Activated CD8-positive, alpha-beta memory T cell treated with anti-CD3 and anti-CD28 coated beads, Interleukin-2, amount 10 ng/mL, durations not matched to agents 7 days and 5 days (primary cell): ENCODE measurements at regions of chr14 and their contacts with region 1.

Region 1: GRCh38 chr14:77151918-77152588 is 10.5 kb upstream of the ZDHHC22 start:
- DNase-seq: no peak
- ATAC-seq: peak; percentile 61
- H3K4me3 Mint-ChIP-seq: no peak overlapping the region
- H3K27ac Mint-ChIP-seq: no peak overlapping the region
- H3K4me1 Mint-ChIP-seq: no peaks in the 10 kb centered on the region
- H3K27me3 Mint-ChIP-seq: peaks cover 31% of the 10 kb centered on the region

Region 2: DNA sequence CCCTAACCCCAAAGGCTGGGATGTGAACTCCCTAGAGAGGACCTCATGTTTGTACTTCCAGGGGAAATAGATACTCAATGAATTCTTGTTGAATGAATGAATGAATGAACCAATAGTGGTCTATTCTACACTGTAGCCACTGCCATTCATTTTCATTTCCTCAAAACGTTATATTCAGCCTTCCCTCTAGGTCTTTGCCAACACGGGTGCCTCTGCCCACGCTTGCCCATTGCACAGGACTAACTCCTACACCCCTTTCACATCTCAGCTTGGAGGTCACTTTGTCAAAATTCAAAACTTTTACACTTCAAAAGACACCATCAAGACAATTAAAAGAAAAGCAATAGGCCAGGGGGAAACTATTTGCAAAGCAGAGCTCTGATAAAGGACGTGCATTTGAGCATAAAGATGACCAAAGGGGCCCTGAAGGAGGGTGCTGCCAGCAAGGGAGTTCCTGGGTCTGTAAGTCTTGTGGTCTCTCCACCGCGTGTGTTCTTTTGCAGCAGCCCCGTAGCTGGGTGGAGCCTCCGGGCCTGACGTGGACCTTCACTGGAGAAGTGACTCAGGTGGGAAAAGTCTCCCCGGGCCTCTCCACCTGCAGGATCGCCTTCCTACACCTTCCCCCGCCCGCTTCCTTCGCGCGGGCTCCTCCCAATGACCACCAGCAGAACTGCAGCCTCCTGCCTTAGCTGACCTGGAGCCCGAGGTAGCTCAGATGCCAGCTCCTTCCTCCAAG is 61.1 kb after region 1 on chr14:
- CTCF ChIA-PET with region 1: interaction called, 11 read pairs
- DNase-seq: peak; percentile 57
- ATAC-seq: peak; percentile 84
- H3K4me3 Mint-ChIP-seq: no peak overlapping the region
- H3K27ac Mint-ChIP-seq: no peak overlapping the region
- H3K4me1 Mint-ChIP-seq: no peaks in the 10 kb centered on the region
- H3K27me3 Mint-ChIP-seq: peaks cover 8% of the 10 kb centered on the region